Lower leg skin (tissue), 4 donors: ENCODE measurements at regions of chr11 and their contacts with region 1.

Region 1: GRCh38 chr11:125429166-125429707 is 66.8 kb downstream of the FEZ1 start:
- DNase-seq: no peak
- H3K4me3 ChIP-seq: no peak overlapping the region
- CTCF ChIP-seq: no peak
- POLR2A ChIP-seq: no peak

Region 2: GRCh38 chr11:124961972-124962609 is 467.1 kb before region 1 on chr11:
- intact Hi-C with region 1: loop called (anchors 10 kb)
- DNase-seq: no peak
- H3K4me3 ChIP-seq: no peak overlapping the region
- CTCF ChIP-seq: no peak
- POLR2A ChIP-seq: no peak

Region 3: DNA sequence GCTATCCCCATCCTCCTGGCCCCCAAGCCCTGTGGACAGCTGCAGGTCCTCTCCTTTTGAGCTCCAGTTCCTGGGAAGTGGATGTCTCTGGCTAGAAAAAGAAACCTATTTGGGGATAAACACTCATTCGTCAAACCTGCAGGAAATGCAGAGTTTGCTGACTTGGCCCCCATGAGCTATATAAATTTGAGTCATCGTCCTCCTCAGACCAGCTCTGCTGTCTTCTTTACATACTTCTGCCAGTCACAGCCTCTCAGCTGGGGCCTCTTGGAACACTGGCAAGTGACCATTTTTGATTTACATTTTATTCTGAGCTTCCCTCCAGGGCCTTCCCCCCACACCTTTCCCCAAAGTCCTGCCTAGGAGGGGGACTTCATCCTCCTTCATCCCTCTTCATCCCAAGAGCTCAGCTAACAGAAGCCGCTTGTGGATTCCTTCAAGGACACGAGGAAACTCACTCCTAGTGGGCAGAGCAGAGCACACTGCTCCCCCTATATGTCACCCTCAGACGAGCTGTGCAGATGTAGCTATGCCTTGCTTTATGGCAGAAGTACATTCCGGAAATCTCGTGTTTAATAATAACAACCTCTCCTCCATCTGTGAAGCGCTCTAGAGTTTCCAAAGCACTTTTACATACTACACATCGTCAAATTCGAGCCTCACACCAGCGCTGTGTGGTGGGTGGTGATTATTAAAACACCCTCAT is 65.0 kb before region 1 on chr11:
- intact Hi-C with region 1: no loop called
- DNase-seq: no peak
- H3K4me3 ChIP-seq: no peak overlapping the region
- CTCF ChIP-seq: no peak
- POLR2A ChIP-seq: no peak